MCF 10A (cell line): ENCODE measurements at regions of chr16 and their contacts with region 1.

Region 1: DNA sequence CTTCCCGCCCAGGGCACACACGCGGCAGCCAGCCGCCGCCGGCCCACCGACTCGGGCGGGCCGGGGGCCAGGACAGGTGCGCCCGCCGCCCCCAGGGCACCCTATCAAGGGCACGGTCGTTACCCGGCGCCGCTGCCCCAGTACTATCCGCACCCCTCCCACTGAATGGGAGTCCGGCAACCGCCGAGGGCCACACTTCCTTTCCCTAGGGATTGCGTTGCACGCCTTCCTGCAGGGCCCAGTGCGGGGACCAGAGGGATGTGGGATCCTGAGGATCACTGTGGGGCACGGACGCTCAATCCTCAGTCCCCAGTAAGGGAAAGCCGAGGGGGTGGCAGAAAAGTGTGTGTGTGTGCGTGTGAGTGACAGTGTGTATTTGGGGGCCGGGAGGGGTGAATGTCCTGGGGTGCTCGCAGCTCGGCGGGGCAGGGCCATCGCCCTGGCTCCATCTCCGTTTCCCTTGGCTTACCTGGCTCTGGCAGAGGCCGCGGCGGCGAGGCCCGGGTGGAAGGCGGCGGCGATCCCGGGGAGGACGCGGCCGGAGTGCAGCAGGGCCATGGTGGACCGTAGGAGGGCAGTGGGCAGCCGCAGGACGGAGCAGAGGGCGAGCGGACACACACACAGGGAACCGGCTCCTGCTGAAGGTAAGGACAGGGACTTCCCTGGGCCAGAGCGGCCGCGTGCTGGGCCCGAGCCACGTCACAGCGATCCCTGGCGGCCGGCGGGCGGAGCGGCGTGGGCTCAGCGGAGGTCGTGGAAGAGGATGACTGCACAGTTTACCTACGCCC is at the start of gene GOT2:
- DNase-seq: peak; percentile 83
- H3K4me3 Mint-ChIP-seq: peak within 1 kb of the TSS; percentile 95
- H3K27ac Mint-ChIP-seq: peak within 1 kb of the TSS; percentile 71
- H3K4me1 Mint-ChIP-seq: peaks cover 11% of the 10 kb centered on the region
- H3K27me3 Mint-ChIP-seq: no peaks in the 10 kb centered on the region
- CTCF ChIP-seq: peak; percentile 81
- total RNA-seq, gene GOT2: 86.8 and 96.9 TPM in 2 replicates

Region 2: DNA sequence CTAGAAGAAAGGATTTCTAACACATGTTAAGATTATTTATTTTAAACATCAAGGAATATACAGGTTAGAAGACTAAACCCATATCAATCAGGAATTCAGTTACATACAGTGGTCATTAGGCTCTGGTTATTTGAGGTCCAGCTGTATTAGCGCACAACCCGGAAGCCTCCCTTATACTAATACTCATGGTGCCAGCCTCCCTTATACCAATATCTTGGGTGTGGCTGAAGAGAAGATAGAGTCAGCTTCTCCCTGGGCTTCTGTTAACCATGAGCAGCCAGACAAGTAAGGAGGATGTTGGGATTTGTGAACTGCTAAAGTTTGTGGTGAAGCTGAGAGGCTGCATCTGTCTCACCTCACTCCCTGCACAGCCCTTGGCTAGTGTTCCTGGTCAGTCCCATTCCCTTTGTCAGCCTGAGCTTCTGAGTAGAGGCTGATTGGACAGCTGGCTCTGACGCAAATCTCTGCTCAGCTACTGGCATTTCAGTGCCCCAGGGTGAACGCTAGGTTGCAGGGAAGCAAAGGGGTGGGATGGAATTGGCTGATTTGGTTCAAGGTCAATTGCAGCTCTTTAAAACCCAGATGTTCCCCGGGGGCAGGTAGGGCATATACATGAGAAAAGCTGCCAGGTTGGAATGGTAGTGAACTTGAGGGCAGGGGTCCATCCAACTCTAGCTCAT is 81.3 kb before region 1 on chr16:
- CTCF ChIA-PET with region 1: no interaction called
- POLR2A ChIA-PET with region 1: no interaction called
- intact Hi-C with region 1: no loop called
- DNase-seq: peak; percentile 51
- H3K4me3 Mint-ChIP-seq: no peak overlapping the region
- H3K27ac Mint-ChIP-seq: no peak overlapping the region
- H3K4me1 Mint-ChIP-seq: no peaks in the 10 kb centered on the region
- H3K27me3 Mint-ChIP-seq: no peaks in the 10 kb centered on the region
- CTCF ChIP-seq: no peak

Region 3: DNA sequence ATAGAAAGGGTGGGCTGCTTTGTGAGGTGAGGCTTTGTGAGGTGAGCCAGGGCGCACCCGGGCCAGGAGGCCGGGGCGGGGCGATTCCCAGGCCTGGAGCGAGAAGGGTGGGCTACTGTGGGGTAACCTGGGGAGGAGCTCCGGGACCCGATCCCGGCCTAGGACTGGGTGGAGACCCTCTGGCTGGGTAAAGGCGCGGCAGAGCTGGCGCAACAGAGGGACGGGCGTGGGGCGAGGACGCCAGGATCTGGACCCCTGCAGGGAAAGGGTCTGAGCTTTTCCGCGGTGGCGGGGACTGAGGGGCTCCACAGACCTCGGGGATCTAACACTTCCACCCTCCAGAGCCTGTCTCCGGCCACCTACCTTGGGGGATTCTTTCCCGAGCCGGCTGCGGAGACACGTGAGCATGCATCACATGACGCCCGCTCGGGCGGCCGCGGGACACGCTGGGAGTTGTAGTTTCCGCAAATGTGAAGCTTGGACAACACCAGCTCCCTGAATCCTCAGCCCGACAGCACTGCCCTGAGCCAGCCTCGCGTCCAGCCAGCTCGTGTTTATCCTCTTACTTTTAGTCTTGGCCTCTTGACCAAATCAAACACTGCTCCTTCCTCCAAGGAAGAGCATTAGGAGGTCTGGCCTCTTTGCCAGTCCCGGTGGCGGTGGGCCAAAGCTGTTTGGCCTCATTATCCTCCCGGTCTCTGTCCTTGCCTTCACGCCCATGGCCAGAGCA is 49.3 kb before region 1 on chr16 and contains the start of gene SLC38A7:
- CTCF ChIA-PET with region 1: interaction called, 5 read pairs
- POLR2A ChIA-PET with region 1: interaction called, 8 read pairs
- intact Hi-C with region 1: loop called (anchors 10 kb)
- DNase-seq: peak; percentile 76
- H3K4me3 Mint-ChIP-seq: peak within 1 kb of the TSS; percentile 86
- H3K27ac Mint-ChIP-seq: peak within 1 kb of the TSS; percentile 73
- H3K4me1 Mint-ChIP-seq: peaks cover 16% of the 10 kb centered on the region
- H3K27me3 Mint-ChIP-seq: no peaks in the 10 kb centered on the region
- CTCF ChIP-seq: no peak
- total RNA-seq, gene SLC38A7: 12.6 and 21.4 TPM in 2 replicates

Region 4: GRCh38 chr16:58723109-58723508 is 10.8 kb before region 1 on chr16:
- CTCF ChIA-PET with region 1: interaction called, 4 read pairs
- POLR2A ChIA-PET with region 1: interaction called, 12 read pairs
- intact Hi-C with region 1: no loop called
- DNase-seq: no peak
- H3K4me3 Mint-ChIP-seq: no peak overlapping the region
- H3K27ac Mint-ChIP-seq: no peak overlapping the region
- H3K4me1 Mint-ChIP-seq: no peaks in the 10 kb centered on the region
- H3K27me3 Mint-ChIP-seq: no peaks in the 10 kb centered on the region
- CTCF ChIP-seq: no peak